Endothelial cell of umbilical vein (primary cell): ENCODE measurements at regions of chr5 and their contacts with region 1.

Region 1: GRCh38 chr5:69326363-69326762 is 6.2 kb downstream of the CCDC125 start:
- DNase-seq: no peak
- H3K4me3 ChIP-seq: no peak overlapping the region
- H3K27ac ChIP-seq: no peak overlapping the region
- H3K4me1 ChIP-seq: no peaks in the 10 kb centered on the region
- H3K27me3 ChIP-seq: no peaks in the 10 kb centered on the region
- CTCF ChIP-seq: no peak
- POLR2A ChIP-seq: no peak

Region 2: GRCh38 chr5:69271376-69271775 is 55.0 kb before region 1 on chr5:
- CTCF ChIA-PET with region 1: interaction called, 3 read pairs
- POLR2A ChIA-PET with region 1: no interaction called
- dilution Hi-C with region 1: no loop called
- intact Hi-C with region 1: loop called (anchors 10 kb)
- DNase-seq: peak; percentile 44
- H3K4me3 ChIP-seq: no peak overlapping the region
- H3K27ac ChIP-seq: no peak overlapping the region
- H3K4me1 ChIP-seq: no peaks in the 10 kb centered on the region
- H3K27me3 ChIP-seq: no peaks in the 10 kb centered on the region
- CTCF ChIP-seq: no peak
- POLR2A ChIP-seq: no peak